PC-3 (cell line): ENCODE measurements at regions of chr10 and their contacts with region 1.

Region 1: GRCh38 chr10:130110246-130111112 is at the start of gene C10orf143:
- DNase-seq: peak; percentile 90
- ATAC-seq: peak; percentile 79
- H3K4me3 ChIP-seq: peak within 1 kb of the TSS; percentile 92
- H3K27ac ChIP-seq: peak within 1 kb of the TSS; percentile 78
- H3K4me1 ChIP-seq: peaks cover 13% of the 10 kb centered on the region
- H3K27me3 ChIP-seq: no peaks in the 10 kb centered on the region
- CTCF ChIP-seq: no peak
- total RNA-seq, gene C10orf143: 0.29 TPM in 1 of 2 replicates, not detected in the other

Region 2: GRCh38 chr10:129963641-129964501 is 146.6 kb before region 1 on chr10 and contains the start of gene EBF3:
- CTCF ChIA-PET with region 1: no interaction called
- POLR2A ChIA-PET with region 1: no interaction called
- intact Hi-C with region 1: loop called (anchors 10 kb)
- DNase-seq: peak; percentile 9
- ATAC-seq: peak; percentile 60
- H3K4me3 ChIP-seq: peak within 1 kb of the TSS; percentile 62
- H3K27ac ChIP-seq: no peak within 1 kb of the TSS
- H3K4me1 ChIP-seq: no peaks in the 10 kb centered on the region
- H3K27me3 ChIP-seq: peaks cover 81% of the 10 kb centered on the region
- CTCF ChIP-seq: no peak
- total RNA-seq, gene EBF3: not detected in 2 replicates

Region 3: DNA sequence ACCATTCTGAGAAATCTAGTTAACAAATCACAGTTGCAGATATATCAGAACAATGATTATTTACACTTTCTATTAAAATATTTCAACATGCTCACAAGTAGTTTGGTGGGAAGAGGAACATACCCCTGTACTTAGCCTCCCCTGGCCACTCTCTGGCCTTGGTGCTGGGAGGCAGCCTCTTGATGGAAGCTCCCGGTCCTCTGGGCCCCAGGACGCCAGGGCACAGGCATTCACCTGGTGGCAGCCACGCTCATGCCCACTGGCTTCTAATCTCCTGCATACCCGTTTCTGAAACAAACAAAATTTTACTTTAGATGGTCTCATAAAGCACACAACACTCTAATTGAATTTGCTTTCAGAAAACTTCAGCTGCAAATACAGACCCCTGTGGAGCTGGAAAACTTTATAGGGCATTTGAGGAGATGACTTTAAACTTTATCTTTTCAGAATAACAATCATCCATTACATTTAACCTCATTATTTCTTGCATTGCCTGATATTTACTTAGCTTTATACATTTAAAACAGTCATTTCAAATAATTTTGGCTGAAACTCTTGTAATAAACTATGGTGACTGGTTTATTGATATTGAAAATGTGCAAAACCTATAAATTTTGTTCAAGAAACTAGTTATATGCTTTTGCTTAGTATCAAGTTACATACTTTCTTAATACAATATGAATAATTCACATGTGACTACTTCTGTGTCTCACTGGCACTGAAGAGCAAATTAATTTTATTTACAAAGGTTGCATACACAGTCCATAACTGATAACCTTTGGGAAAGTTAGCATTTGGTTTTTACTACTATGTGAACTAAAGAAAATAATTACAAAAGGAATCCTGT is 30.6 kb before region 1 on chr10:
- CTCF ChIA-PET with region 1: no interaction called
- POLR2A ChIA-PET with region 1: interaction called, 4 read pairs
- intact Hi-C with region 1: loop called (anchors 2 kb)
- DNase-seq: no peak
- ATAC-seq: peak; percentile 24; the same call in 1 of the 2 replicates
- H3K4me3 ChIP-seq: no peak overlapping the region
- H3K27ac ChIP-seq: no peak overlapping the region
- H3K4me1 ChIP-seq: no peaks in the 10 kb centered on the region
- H3K27me3 ChIP-seq: no peaks in the 10 kb centered on the region
- CTCF ChIP-seq: no peak

Region 4: GRCh38 chr10:130127364-130128061 is 17.0 kb after region 1 on chr10:
- CTCF ChIA-PET with region 1: interaction called, 4 read pairs
- POLR2A ChIA-PET with region 1: no interaction called
- intact Hi-C with region 1: loop called (anchors 1 kb)
- DNase-seq: peak; percentile 72
- ATAC-seq: peak; percentile 98
- H3K4me3 ChIP-seq: no peak overlapping the region
- H3K27ac ChIP-seq: no peak overlapping the region
- H3K4me1 ChIP-seq: no peaks in the 10 kb centered on the region
- H3K27me3 ChIP-seq: no peaks in the 10 kb centered on the region
- CTCF ChIP-seq: peak; percentile 75

Region 5: DNA sequence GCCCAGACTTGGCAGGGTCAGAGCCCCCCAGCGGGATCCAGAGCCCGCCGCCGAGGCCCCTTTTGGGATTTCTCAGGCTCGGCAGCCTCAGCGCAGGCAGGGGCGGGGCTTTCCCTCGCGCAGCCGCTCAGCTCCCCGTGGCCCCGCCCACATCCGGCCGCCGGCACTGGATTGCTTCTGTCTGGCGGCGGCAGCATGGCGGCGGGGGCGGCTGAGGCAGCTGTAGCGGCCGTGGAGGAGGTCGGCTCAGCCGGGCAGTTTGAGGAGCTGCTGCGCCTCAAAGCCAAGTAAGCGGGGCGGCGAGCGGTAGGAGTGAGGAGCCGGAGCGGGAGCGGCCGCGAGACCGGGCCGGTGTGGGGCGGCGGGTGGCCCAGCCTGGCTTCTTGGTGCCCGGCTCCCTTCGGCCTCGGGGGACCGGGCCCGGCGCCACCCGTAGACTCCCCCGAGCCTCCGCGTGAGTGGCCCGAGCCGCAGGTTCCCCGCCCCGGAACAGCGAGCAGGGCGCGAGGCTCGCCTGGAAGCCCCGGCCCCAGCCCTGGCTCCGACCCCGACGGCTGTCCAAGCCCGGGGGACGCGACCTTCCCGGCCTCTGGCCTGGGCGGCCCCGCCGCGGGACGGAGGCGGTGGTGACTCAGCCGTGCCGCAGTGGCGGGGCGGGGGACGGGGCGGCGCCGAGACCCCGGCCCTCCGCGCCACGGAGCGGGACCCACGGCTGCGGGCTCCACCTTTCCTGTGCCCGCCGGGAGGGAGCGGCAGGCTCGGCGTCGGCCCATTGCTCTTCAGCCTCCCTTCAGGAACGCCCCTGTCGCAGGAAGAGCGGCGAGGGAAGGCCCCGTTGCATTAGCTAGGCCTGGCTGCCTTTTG is 26.0 kb after region 1 on chr10 and contains the start of gene GLRX3:
- CTCF ChIA-PET with region 1: interaction called, 7 read pairs
- POLR2A ChIA-PET with region 1: interaction called, 9 read pairs
- intact Hi-C with region 1: loop called (anchors 1 kb)
- DNase-seq: peak; percentile 73
- ATAC-seq: peak; percentile 71
- H3K4me3 ChIP-seq: peak within 1 kb of the TSS; percentile 89
- H3K27ac ChIP-seq: peak within 1 kb of the TSS; percentile 86
- H3K4me1 ChIP-seq: peaks cover 14% of the 10 kb centered on the region
- H3K27me3 ChIP-seq: no peaks in the 10 kb centered on the region
- CTCF ChIP-seq: no peak
- total RNA-seq, gene GLRX3: 98.1 and 107 TPM in 2 replicates